ENCODE measurements at regions of chr3 and their contacts with region 1.

Region 1: DNA sequence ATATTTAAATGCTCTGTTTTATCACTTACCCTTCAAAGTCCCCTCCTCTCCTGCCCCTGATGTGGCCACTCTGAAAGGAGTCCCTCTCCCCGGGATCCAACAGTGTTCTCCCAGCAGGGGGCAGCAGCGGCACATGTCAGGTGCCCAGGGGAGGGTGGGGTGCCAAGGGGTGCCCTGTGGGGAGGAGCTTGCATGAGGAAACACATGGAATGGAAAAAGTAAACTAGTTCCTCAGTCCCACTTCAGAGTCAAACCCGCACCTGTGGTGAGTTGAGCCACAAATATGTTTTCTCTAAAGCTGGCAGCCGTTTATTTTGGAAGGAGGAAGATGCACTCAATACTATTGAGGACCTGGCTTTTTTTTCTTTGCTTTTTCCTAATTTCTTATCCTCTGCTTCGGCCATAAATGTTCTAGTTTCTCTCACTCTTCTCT is 30.1 kb upstream of the NRROS start:
- DNase-seq: peak; percentile 38 to 84 (median 78)
- H3K4me3 ChIP-seq: peak overlapping the region in 3 of 59 donors; percentile 18 to 26 (median 24)
- H3K27ac ChIP-seq: peak overlapping the region in 2 of 59 donors; percentile 19
- H3K27me3 ChIP-seq: no peaks in the 10 kb centered on the region
- CTCF ChIP-seq: peak; percentile 19 to 94 (median 82)

Region 2: DNA sequence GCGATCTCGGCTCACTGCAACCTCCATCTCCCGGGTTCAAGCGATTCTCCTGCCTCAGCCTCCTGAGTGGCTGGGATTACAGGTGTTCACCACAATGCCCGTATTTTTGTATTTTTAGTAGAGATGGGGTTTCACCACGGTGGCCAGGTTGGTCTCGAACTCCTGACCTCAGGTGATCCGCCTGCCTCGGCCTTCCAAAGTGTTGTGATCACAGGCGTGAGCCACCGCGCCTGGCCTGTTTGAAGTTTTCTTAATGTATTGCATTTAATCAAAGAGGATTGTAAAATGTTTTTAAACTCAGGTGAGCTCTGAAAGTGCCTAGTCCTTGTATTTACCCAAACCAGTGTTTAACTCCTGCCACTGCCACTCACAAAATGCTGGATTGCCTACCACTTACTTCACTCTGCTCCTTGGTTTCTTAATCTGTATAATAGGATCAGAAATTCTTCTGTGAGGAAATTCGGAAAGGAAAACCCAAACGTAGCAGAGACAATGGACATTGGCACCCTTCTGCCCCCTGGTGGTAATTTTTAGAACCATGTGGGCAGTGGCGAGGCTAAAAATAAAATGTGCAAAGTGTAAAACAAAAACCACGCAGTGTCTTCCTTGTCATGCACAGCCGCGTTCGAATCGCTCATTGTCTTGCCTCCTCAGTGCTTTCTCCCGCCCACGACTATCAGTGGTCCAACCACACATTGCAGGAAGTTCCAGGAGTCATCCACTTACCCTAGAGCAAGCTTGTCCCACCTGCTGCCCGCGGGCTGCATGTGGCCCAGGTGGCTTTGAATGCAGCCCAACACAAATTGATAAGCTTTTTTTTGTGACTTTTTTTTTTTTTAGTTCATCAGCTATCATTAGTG is 75.4 kb after region 1 on chr3:
- intact Hi-C with region 1: loop called (anchors 1 to 2 kb)
- DNase-seq: peak in 9 of 10 donors; percentile 36 to 78 (median 54)
- H3K4me3 ChIP-seq: peak overlapping the region in 40 of 59 donors; percentile 2 to 43 (median 26)
- H3K27ac ChIP-seq: peak overlapping the region in 27 of 59 donors; percentile 2 to 70 (median 36)
- H3K27me3 ChIP-seq: no peaks in the 10 kb centered on the region
- CTCF ChIP-seq: peak; percentile 81 to 97 (median 93)

Region 3: GRCh38 chr3:196969660-196970546 is 360.5 kb after region 1 on chr3:
- intact Hi-C with region 1: loop called in 1 of 2 experiments (anchors 5 kb)
- DNase-seq: peak in 3 of 10 donors; percentile 37 to 78 (median 60)
- H3K4me3 ChIP-seq: peak overlapping the region; percentile 55 to 89 (median 77)
- H3K27ac ChIP-seq: peak overlapping the region in 32 of 59 donors; percentile 22 to 87 (median 72)
- H3K27me3 ChIP-seq: no peaks in the 10 kb centered on the region
- CTCF ChIP-seq: peak in 55 of 56 donors; percentile 30 to 99 (median 76)

Measured in dorsolateral prefrontal cortex (tissue), 120 donors.